ENCODE measurements at regions of chr9 and their contacts with region 1.

Region 1: GRCh38 chr9:132507746-132508469 is 74.5 kb upstream of the BARHL1 start:
- DNase-seq: peak; percentile 67
- ATAC-seq: peak; percentile 83

Region 2: DNA sequence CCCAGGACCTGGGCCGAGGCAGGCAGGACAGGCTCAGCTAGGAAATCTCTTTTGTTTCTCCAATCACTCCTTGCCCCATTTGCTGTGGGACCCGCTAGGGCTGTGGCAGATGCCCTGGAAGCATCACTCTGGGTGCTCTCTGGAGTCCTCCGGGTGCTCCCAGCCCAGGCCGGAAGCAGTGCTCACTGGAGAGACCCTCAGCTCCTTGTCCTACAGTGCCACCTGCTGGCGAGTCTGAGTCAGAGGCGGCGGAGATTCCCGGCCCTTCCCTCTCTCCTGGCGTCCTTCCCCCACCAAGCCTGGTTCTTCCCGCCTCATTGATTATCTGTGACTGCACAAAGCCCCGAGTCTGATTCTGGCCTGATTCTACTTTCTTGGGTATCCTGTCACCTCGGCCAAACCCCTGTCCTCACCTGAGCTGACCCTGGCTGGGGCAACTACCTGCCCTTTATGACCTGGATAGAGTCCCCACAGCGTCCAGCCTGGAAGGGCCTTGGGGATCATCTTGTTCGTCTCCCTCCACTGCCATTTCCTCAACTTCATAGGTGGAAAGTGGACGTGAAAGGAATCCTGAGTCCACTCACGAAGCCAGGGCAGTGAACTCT is 67.2 kb after region 1 on chr9:
- intact Hi-C with region 1: loop called (anchors 2 kb)
- DNase-seq: peak; percentile 75
- ATAC-seq: peak; percentile 91

Region 3: GRCh38 chr9:132800038-132800648 is 292.2 kb after region 1 on chr9:
- intact Hi-C with region 1: loop called (anchors 5 kb)
- DNase-seq: peak; percentile 90
- ATAC-seq: peak; percentile 86

Measured in Right ventricle myocardium superior (tissue), 1 donor.